Mucosa of descending colon (tissue), 3 donors: ENCODE measurements at regions of chr3 and their contacts with region 1.

Region 1: DNA sequence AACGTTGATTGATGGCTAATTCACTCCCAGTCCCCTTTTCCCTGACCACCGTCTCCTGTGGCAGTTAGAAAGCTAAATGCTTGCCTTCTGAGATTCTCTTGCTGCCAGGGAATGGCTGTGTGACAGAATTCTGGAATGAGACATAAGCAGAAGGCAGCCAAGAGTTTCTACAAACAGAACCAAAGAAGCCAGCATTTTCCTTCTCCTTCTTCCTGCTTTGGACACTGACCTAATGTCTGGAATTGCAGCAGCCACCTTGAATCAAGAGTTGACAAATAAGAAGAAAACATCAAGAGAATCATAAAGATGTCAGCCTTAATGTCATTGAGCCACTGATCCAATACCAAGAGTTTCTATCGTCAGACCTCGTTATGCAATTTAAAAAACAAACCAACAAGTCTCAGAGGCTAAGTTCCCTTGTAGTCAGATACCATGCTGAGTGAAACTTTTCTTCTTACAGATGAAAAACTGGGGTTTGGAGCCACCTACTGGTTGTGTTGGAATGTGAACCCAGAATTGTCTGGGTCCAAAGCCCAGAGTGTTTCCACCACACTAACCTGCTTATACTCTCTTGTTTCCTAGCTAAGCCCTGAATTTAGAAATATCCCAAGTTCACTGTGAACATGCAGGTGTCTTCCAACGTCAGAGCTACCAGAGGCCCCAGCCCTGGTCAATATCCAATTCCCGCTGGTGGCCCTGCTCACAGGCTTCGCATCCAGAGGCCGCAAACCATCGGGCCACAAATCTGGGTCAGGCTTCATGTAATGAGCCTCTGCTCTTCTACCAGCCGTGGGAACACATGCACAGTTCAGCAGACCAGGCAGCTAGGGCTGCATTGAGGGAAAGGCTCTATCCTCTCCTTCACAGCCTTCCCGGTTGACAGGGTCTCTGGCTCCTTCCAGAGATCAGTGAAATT is 42.5 kb downstream of the MCF2L2 start:
- DNase-seq: peak in 1 of 3 donors; percentile 84
- ATAC-seq: peak; percentile 90
- H3K4me3 ChIP-seq: no peak overlapping the region
- H3K4me1 ChIP-seq: peaks cover 5% of the 10 kb centered on the region
- CTCF ChIP-seq: peak; percentile 49

Region 2: DNA sequence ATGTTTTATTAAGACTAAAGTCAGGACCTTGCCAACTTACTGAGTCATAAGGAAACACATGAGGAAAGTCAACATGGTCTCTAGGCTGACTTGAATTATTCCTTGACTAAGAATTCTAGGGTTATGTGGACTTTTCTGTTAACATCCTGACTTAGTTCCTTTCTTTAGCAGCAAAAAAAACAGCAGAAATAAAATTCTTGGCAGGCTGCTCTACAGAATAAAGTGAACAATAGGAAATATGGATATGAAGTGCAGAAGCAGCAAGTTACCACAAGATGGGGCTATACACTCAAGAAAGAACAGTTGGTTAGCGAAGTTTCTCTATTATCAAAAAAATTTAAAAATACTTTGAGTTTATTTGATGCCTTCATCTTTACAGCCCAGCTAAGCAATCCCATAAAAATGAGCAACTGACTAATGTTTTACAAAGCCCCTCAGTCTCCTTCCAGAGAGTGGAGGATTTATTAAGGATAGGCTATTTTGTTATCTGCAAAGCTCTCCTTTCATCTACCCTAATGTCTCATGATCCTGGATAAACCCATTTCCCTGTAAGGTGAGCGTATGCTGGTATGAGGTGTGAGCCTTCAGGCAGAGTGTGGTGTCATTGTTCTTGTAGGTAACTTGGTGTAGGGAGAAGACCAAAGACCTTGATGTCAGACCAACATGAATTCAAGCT is 263.6 kb before region 1 on chr3:
- intact Hi-C with region 1: loop called (anchors 5 kb)
- DNase-seq: no peak
- ATAC-seq: peak; percentile 65
- H3K4me3 ChIP-seq: no peak overlapping the region
- H3K4me1 ChIP-seq: no peaks in the 10 kb centered on the region
- CTCF ChIP-seq: peak; percentile 60

Region 3: DNA sequence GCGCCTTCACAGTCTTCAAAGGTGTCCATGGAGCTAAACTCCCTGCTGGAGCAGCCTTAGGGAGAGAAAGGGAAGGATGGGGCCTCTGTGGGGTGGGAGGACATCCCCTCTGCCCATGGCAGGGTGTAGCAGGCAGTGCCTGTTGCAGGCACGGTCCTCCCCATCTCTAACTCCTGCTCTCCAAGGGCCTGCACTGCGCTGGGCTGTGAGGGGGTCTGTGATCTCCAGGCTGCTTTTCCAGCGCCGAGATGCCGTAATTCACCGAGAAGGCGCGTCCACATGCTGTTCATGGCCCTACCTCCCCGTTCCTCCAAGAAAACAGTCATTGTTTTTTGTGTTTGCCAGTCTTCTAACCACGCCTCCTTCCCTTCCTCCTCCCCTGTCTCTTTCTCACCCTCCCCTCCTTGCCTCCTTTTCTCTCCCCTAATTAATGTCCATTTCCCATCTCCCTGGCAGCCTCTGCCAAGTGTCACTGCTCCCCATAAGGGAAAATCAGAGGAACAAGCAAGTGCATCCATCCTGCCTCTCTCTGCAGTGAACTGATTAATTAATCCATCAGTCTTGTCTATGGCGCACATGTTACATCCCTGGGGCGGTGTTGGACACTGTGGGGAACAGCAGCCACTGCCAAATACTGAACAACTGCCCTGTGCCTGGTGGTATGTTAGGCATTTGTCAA is 205.7 kb before region 1 on chr3:
- intact Hi-C with region 1: loop called (anchors 2 to 5 kb)
- DNase-seq: no peak
- ATAC-seq: no peak
- H3K4me3 ChIP-seq: no peak overlapping the region
- H3K4me1 ChIP-seq: peaks cover 15% of the 10 kb centered on the region
- CTCF ChIP-seq: no peak

Region 4: DNA sequence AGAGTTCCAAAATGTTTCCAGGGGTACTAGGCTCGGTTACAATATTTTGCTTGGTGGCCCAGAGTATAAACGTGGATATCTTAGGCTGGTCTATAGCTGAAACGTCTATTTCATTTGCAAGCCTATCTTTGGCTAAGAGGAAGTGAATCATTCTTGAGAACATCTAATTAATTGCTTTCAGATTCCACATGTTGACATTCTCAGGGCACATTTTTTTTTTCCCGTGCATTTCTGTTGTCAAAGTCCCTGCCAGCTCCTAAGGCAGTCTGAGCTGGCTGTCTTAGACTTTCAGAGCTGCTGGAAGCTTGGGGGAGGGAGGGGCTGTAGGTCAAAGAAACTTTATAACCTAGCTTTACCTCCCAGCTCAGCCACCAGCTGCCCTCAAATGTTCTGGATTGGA is 200.3 kb before region 1 on chr3:
- intact Hi-C with region 1: loop called (anchors 2 to 5 kb)
- DNase-seq: no peak
- ATAC-seq: no peak
- H3K4me3 ChIP-seq: no peak overlapping the region
- H3K4me1 ChIP-seq: no peaks in the 10 kb centered on the region
- CTCF ChIP-seq: no peak

Region 5: GRCh38 chr3:183252973-183253901 is 132.7 kb before region 1 on chr3 and contains the start of gene B3GNT5:
- intact Hi-C with region 1: loop called in 1 of 2 experiments (anchors 5 kb)
- DNase-seq: peak; percentile 89 to 94 (median 89)
- ATAC-seq: peak; percentile 88
- H3K4me3 ChIP-seq: peak within 1 kb of the TSS; percentile 63
- H3K4me1 ChIP-seq: peaks cover 5% of the 10 kb centered on the region
- CTCF ChIP-seq: no peak
- total RNA-seq, gene B3GNT5: 33.7 to 80.1 (median 71.2) TPM